AG04450 (cell line): ENCODE measurements at regions of chrX and their contacts with region 1.

Region 1: GRCh38 chrX:103488794-103489193 is 30.5 kb downstream of the RAB40A start:
- DNase-seq: no peak
- H3K4me3 ChIP-seq: no peak overlapping the region
- H3K27ac ChIP-seq: no peak overlapping the region
- H3K27me3 ChIP-seq: no peaks in the 10 kb centered on the region
- CTCF ChIP-seq: no peak

Region 2: DNA sequence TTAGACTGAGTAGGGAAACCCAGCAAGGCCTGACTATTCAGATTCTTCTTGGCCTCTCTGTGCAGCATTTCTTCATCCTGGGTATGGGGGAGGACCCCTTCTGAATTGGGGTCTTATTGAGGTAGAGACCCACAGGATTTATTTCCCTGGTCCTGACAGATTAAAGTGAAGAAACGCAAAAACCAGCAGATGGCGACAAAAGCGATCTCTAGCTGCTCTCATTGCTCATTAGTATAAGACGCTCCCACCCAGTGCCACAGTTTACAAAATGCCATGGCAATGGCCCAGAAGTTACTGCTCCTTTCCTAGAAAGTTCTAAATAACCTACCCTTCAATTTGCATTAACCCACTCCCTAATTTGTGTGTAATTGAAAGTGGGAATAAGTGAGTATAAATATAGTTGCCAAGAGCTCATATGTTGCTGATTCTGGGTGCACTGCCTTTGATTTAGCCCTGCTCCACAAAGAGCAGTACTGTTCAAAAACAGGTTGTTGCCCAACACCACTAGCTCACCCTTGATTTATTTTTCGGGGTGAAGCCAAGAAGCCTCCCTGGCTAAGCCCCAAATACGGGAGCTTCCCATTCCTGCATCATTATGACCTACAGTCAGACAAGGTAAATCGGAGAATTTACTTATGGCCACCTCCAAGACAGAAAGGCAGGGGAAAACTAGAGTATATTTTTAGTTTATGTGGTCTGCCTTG is 277.6 kb before region 1 on chrX:
- CTCF ChIA-PET with region 1: interaction called, 15 read pairs
- POLR2A ChIA-PET with region 1: no interaction called
- DNase-seq: no peak
- H3K4me3 ChIP-seq: no peak overlapping the region
- H3K27ac ChIP-seq: no peak overlapping the region
- H3K27me3 ChIP-seq: peaks cover 5% of the 10 kb centered on the region
- CTCF ChIP-seq: peak; percentile 53

Region 3: DNA sequence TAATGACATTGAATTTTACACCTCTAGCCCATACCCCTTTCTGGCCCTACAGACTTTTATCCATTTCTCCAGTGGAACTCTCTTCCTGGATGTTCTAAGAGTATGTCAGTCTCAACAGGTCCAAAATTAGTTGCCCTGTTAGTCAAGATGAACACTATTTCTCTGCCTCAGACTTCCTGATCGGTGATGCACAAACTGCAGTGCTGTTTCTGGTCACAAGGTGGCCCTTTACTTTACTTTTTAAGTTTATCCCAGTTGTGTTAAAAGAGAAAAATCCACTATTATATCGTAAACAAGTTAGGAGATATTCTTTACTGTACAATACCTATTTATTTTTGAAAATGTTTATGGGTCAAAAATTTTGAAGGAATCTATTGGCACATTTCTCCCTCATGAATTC is 145.7 kb before region 1 on chrX:
- CTCF ChIA-PET with region 1: interaction called, 11 read pairs
- POLR2A ChIA-PET with region 1: no interaction called
- DNase-seq: no peak
- H3K4me3 ChIP-seq: no peak overlapping the region
- H3K27ac ChIP-seq: no peak overlapping the region
- H3K27me3 ChIP-seq: peaks cover 7% of the 10 kb centered on the region
- CTCF ChIP-seq: peak; percentile 72

Region 4: GRCh38 chrX:103477496-103477895 is 11.3 kb before region 1 on chrX:
- CTCF ChIA-PET with region 1: interaction called, 11 read pairs
- POLR2A ChIA-PET with region 1: no interaction called
- DNase-seq: no peak
- H3K4me3 ChIP-seq: no peak overlapping the region
- H3K27ac ChIP-seq: no peak overlapping the region
- H3K27me3 ChIP-seq: no peaks in the 10 kb centered on the region
- CTCF ChIP-seq: no peak